ENCODE measurements at regions of chr6 and their contacts with region 1.

Region 1: GRCh38 chr6:149733089-149733720 is 13.1 kb downstream of the NUP43 start:
- DNase-seq: no peak
- H3K4me3 ChIP-seq: no peak overlapping the region
- H3K27ac ChIP-seq: no peak overlapping the region
- H3K4me1 ChIP-seq: no peaks in the 10 kb centered on the region
- H3K27me3 ChIP-seq: no peaks in the 10 kb centered on the region
- CTCF ChIP-seq: no peak
- POLR2A ChIP-seq: no peak

Region 2: DNA sequence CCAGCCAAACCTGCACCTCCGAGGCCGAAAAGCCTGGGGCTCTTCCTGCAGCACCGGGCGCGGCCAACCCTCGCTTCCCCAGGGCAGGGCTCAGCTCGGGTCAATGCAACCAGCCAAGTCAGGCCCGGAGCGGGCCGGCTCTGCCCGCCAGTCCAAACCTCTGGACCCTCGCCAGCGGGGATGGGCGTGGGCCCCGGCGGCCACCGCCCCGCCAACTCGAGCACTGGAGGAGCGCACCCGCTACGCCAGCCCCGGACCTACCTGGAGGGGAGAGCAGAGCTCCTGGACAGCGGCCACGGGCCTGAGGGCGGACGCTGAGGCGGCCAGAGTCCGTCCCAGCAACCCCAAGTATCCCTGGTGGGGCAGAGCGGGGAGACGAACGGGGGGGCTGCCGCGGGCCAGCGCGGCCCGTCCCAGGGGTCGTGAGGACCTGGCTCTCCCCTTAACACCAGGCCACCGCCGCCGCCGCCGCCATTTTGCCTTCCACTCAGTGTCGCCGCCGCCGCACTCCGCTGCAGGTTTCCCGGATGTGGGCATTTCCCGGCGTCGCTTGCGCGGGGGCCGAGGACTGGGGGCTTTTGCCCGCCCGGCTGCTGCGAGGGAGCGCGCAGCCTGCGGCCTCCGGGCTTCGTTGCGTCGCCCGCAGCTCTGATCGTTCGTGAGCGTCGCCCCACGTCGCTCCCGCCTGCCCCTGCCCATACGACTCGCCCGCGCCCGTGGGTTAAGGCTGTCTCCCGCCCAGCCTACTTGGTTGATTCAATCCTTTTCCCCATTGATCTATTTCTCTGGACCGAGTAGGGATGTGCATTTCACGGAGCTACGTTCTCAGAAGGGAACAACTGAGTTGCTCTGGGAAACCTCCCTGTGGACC is 15.4 kb before region 1 on chr6 and contains the start of gene LATS1:
- intact Hi-C with region 1: loop called (anchors 1 kb)
- DNase-seq: peak; percentile 84 to 92
- H3K4me3 ChIP-seq: peak within 1 kb of the TSS; percentile 87 to 95 (median 94)
- H3K27ac ChIP-seq: peak within 1 kb of the TSS; percentile 99 to 100
- H3K4me1 ChIP-seq: no peaks in the 10 kb centered on the region
- H3K27me3 ChIP-seq: no peaks in the 10 kb centered on the region
- CTCF ChIP-seq: no peak
- POLR2A ChIP-seq: peak; percentile 69
- total RNA-seq, gene LATS1: 24.3 to 36.4 (median 30.2) TPM